B cell (primary cell): ENCODE measurements at regions of chr10 and their contacts with region 1.

Region 1: DNA sequence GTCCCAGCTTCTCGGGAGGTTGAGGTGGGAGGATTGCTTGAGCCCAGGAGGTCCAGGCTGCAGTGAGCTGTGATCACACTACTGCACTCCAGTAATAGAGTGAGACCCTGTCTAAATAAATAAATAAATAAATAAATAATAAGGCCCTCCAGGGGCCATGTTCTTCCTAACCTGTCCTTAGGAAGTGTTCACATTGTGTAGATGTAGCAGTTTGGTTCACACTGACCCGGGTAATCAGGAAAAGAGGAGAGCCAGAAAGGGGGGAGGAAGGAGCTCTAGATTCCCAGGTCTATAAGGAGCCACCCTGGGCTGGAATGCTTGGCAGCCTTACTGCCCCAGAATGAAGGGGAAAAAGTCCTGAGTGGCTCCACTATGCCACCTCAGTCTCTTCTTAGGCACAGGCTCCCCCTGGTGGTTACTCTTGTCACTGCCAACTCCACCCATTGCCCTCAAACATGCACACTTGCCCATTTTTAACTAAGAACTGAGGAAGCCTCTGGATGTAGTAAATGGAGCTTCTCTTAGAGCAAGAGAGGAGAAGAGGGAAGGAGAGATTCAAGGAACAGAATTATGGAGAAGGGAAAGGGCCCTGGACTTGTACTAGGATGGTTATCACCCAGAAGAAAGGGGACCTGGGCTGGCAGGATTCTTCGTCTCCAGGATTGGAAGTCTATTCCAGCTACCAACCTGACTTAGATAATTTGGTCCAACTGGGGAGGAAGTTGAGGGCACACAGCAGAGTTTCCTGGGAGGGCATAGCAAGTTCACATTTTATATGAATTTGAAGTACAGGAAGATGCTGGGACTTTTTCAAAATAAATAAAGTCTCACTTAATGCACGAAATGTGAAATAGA is 7.8 kb downstream of the HPS6 start:
- DNase-seq: peak; percentile 84
- ATAC-seq: peak; percentile 94
- H3K4me3 ChIP-seq: no peak overlapping the region
- H3K4me3 Mint-ChIP-seq: no peak overlapping the region
- H3K27ac ChIP-seq: no peak overlapping the region
- H3K27ac Mint-ChIP-seq: no peak overlapping the region
- H3K4me1 ChIP-seq: no peaks in the 10 kb centered on the region
- H3K4me1 Mint-ChIP-seq: no peaks in the 10 kb centered on the region
- H3K27me3 ChIP-seq: no peaks in the 10 kb centered on the region
- H3K27me3 Mint-ChIP-seq: no peaks in the 10 kb centered on the region
- CTCF ChIP-seq: peak; percentile 91

Region 2: DNA sequence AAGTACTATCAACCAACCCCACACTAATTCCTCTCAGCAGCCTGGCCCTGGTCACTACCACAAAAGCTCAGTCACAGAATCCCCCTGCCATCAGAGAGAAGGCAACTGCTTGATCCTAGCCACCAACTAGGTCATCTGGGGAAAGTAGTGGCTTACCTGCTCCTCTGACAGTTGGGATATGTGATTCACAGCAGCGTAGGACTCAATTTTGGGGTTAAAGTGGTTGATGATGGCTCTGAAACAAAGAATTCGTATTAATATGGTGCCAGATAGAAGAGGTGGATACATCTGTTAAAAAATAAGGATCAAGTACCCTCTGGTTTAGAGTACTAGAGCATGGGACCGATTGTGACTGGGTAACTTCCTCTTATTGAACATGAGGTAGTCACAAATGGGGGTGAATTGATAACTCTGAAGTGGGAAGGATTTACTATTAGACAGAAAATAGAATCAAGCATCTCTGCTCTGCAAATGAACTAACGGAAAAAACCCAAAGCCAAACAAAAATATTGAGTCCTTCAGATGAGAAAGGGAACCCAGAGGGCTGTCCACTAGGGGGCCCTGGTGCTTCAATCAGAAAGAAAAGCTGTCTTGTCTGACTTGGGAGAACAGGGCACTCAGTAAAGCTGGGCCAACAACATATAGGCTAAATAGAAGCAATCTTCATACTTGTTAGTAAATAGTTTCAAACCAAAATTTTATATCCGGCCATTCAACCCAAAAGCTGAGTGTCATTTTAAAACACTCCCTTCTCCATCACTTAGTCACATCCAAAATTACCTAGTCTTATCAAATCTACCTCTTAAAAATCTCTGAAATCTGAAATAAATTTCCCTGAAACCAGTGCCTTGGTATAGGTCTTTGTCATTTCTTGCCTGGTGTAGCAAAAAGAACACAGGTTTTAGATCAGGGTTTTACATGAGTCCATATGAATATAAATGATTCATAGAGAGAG is 183.4 kb before region 1 on chr10:
- CTCF ChIA-PET with region 1: interaction called, 24 read pairs
- POLR2A ChIA-PET with region 1: no interaction called
- intact Hi-C with region 1: loop called (anchors 1 kb)
- DNase-seq: peak; percentile 83
- ATAC-seq: peak; percentile 79
- H3K4me3 ChIP-seq: peak overlapping the region in 1 of 5 experiments; percentile 18
- H3K4me3 Mint-ChIP-seq: peak overlapping the region; percentile 1
- H3K27ac ChIP-seq: peak overlapping the region; percentile 17 to 75
- H3K27ac Mint-ChIP-seq: peak overlapping the region; percentile 59
- H3K4me1 ChIP-seq: peaks cover 23 to 43% of the 10 kb centered on the region in 2 donors
- H3K4me1 Mint-ChIP-seq: peaks cover 48% of the 10 kb centered on the region
- H3K27me3 ChIP-seq: no peaks in the 10 kb centered on the region
- H3K27me3 Mint-ChIP-seq: no peaks in the 10 kb centered on the region
- CTCF ChIP-seq: peak; percentile 90

Region 3: GRCh38 chr10:101961591-101962498 is 111.1 kb before region 1 on chr10:
- CTCF ChIA-PET with region 1: no interaction called
- POLR2A ChIA-PET with region 1: no interaction called
- intact Hi-C with region 1: no loop called
- DNase-seq: no peak
- ATAC-seq: no peak
- H3K4me3 ChIP-seq: no peak overlapping the region
- H3K4me3 Mint-ChIP-seq: no peak overlapping the region
- H3K27ac ChIP-seq: peak overlapping the region in 1 of 2 donors; percentile 60
- H3K27ac Mint-ChIP-seq: peak overlapping the region; percentile 65
- H3K4me1 ChIP-seq: peaks cover 35 to 51% of the 10 kb centered on the region in 2 donors
- H3K4me1 Mint-ChIP-seq: peaks cover 58% of the 10 kb centered on the region
- H3K27me3 ChIP-seq: no peaks in the 10 kb centered on the region
- H3K27me3 Mint-ChIP-seq: no peaks in the 10 kb centered on the region
- CTCF ChIP-seq: no peak

Region 4: DNA sequence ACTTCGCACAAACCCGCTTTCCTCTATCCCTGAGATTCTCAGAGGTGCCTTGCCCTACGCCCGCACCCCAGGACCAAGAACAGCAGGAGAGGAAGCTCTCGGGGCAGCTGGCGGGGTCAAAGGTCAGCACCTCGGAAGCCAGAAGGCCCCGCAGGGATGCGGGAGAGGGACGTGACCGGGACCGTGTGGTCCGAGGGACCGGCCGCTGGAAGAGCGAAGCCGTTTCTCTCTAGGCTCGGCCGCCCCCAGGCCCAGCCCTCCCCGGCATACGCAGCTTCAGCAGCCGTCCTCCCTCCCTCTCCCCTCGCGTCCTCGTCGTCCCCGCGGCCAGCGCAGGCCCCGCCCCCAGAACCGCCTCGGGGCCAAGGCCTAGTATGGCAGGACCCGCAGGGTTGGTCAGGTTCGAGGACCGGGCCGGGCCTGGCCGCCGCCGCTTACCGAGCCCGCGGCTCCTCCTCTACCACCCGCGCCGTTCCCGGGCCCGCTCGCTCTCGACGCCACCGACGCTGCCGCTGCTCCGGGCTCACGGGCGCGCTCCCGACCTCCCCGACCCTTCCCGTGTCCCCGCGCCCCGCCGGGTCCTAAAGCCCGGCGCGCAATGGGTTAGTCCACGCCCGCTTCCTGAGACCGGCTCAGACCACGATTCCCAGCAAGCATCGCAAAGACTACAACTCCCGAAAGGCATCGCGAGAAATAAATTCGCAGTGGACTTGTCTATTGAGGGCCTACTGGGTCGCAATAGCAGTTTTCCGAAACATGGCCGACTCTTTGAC is 17.1 kb before region 1 on chr10 and contains the start of gene ARMH3:
- CTCF ChIA-PET with region 1: interaction called, 16 read pairs
- POLR2A ChIA-PET with region 1: interaction called, 11 read pairs
- intact Hi-C with region 1: no loop called
- DNase-seq: peak; percentile 94
- ATAC-seq: peak; percentile 91
- H3K4me3 ChIP-seq: peak within 1 kb of the TSS; percentile 76 to 99 (median 93)
- H3K4me3 Mint-ChIP-seq: peak within 1 kb of the TSS; percentile 99
- H3K27ac ChIP-seq: peak within 1 kb of the TSS; percentile 75 to 80
- H3K27ac Mint-ChIP-seq: peak within 1 kb of the TSS; percentile 98
- H3K4me1 ChIP-seq: peaks cover 15 to 26% of the 10 kb centered on the region in 2 donors
- H3K4me1 Mint-ChIP-seq: peaks cover 36% of the 10 kb centered on the region
- H3K27me3 ChIP-seq: no peaks in the 10 kb centered on the region
- H3K27me3 Mint-ChIP-seq: no peaks in the 10 kb centered on the region
- CTCF ChIP-seq: no peak
- total RNA-seq, gene ARMH3: 36.2 and 40.7 TPM in 2 replicates

Region 5: DNA sequence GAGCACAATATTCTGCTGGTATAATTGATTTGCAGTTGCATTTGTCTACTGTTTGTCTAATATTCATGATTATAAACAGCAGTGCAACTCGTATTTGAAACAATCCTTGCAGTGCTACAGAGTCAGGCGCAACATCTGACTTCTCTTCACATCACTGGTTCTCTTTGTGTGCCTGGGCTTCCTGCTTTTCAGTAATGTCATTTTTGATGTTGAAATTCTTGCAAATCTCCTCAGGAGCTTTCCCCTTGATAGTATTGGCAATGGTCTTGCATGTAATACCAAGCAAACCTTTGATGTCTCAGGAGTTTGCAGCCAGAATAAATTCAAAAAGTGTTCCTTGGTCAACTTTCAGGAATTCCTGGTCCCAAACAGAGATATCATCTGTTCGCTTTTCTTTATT is 12.4 kb after region 1 on chr10:
- CTCF ChIA-PET with region 1: interaction called, 11 read pairs
- POLR2A ChIA-PET with region 1: no interaction called
- intact Hi-C with region 1: no loop called
- DNase-seq: no peak
- ATAC-seq: no peak
- H3K4me3 ChIP-seq: no peak overlapping the region
- H3K4me3 Mint-ChIP-seq: no peak overlapping the region
- H3K27ac ChIP-seq: no peak overlapping the region
- H3K27ac Mint-ChIP-seq: no peak overlapping the region
- H3K4me1 ChIP-seq: no peaks in the 10 kb centered on the region
- H3K4me1 Mint-ChIP-seq: no peaks in the 10 kb centered on the region
- H3K27me3 ChIP-seq: no peaks in the 10 kb centered on the region
- H3K27me3 Mint-ChIP-seq: no peaks in the 10 kb centered on the region
- CTCF ChIP-seq: no peak

Region 6: GRCh38 chr10:102101152-102101551 is 28.3 kb after region 1 on chr10:
- CTCF ChIA-PET with region 1: interaction called, 22 read pairs
- POLR2A ChIA-PET with region 1: no interaction called
- intact Hi-C with region 1: no loop called
- DNase-seq: no peak
- ATAC-seq: no peak
- H3K4me3 ChIP-seq: no peak overlapping the region
- H3K4me3 Mint-ChIP-seq: no peak overlapping the region
- H3K27ac ChIP-seq: no peak overlapping the region
- H3K27ac Mint-ChIP-seq: no peak overlapping the region
- H3K4me1 ChIP-seq: no peaks in the 10 kb centered on the region
- H3K4me1 Mint-ChIP-seq: peaks cover 7% of the 10 kb centered on the region
- H3K27me3 ChIP-seq: no peaks in the 10 kb centered on the region
- H3K27me3 Mint-ChIP-seq: no peaks in the 10 kb centered on the region
- CTCF ChIP-seq: no peak